Posterior vena cava (tissue), 2 donors: ENCODE measurements at regions of chr12 and their contacts with region 1.

Region 1: GRCh38 chr12:31393004-31393550 is 67.1 kb upstream of the SINHCAF start:
- DNase-seq: no peak

Region 2: DNA sequence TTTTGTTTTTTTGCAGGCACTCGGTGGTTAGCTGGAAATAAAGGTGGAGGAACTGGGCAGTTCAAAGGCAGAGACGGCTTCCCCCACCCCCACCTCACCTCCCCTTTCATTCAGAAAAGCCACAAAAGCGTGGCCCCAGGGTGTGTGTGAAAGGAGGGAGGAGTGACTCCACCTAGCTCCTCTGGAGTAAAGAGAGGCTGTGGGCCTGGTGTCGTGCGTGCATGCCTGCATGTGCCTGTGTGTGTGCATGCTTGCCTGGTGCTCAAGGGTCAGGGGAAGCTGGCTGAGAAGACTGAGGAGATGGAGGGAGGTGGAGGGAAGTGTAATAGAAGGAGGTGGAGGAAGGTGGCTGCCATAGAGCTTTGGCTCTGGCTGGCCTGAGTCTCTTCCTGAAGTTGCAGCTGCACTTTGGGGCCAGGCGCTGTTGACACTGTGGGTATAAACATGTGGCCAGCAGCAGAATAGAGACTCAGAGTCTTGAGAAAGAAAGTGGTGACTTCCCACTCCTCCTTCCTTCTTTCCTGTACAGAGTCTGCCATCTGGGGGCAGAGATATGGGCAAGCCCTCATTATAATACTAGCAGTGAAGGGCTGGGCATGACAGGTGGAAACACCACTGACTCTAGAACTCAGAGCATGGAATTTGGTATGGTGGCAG is 30.2 kb before region 1 on chr12:
- intact Hi-C with region 1: loop called in 1 of 2 experiments (anchors 1 kb)
- DNase-seq: no peak